ENCODE measurements at regions of chr17 and their contacts with region 1.

Region 1: DNA sequence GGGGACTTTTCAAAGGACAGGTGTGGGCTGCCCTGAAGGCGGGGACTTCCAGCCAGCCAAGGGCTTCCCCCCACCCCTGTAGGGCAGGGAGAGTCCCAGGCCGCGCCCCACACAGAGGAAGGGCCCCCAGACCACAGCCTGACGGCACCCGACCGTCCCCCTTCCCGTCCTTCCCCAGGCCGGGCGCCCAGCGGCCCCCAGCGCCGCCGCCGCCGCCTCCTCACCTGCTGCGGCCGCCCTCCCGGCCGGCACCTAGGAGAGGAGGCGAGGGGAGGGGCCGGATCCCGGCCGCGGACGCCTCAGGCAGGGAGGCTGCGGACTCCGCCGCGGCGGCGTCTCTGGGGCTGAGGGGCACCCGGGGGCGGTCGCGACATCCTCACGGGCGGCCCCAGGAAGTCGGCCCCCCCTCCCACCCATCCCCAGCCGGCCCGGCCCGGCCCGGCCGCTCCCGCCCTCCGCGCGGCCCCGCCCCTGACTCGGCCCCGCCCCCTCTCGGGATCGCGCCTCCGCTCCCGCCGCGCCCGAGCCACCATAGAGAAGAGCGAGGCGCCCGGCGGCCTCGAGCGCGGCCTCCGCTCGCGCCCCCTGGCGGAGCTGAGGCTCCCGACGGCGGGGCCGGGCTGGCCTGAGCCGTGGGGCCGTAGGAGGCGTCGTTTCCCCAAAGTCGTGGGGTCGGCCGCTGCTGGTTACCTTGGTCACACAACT is 25.5 kb upstream of the RFFL start:
- DNase-seq: peak; percentile 87
- H3K4me3 Mint-ChIP-seq: peak overlapping the region; percentile 87
- H3K27ac Mint-ChIP-seq: peak overlapping the region; percentile 92
- H3K4me1 Mint-ChIP-seq: peaks cover 51% of the 10 kb centered on the region
- H3K27me3 Mint-ChIP-seq: no peaks in the 10 kb centered on the region

Region 2: DNA sequence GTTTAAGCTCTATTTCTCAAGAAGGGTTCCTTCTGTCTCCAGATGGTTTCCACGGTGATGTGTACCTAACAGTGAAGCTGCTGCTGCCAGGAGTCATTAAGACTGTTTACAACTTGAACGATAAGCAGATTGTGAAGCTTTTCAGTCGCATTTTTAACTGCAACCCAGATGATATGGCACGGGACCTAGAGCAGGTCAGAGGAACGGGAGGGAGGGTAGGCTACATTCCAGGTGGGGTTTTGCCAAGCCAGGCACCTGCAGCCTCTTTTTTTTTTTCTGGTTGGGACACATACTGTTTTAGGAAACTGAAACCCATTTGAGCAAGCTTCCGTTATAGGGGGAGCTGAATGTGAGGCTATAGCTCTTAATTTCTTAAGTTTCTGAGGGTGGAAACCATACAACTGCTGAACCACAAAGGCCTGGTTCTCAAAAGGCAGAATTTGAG is 98.1 kb before region 1 on chr17:
- CTCF ChIA-PET with region 1: interaction called, 14 read pairs
- POLR2A ChIA-PET with region 1: interaction called, 3 read pairs
- DNase-seq: no peak
- H3K4me3 Mint-ChIP-seq: no peak overlapping the region
- H3K27ac Mint-ChIP-seq: no peak overlapping the region
- H3K4me1 Mint-ChIP-seq: peaks cover 26% of the 10 kb centered on the region
- H3K27me3 Mint-ChIP-seq: no peaks in the 10 kb centered on the region

Region 3: DNA sequence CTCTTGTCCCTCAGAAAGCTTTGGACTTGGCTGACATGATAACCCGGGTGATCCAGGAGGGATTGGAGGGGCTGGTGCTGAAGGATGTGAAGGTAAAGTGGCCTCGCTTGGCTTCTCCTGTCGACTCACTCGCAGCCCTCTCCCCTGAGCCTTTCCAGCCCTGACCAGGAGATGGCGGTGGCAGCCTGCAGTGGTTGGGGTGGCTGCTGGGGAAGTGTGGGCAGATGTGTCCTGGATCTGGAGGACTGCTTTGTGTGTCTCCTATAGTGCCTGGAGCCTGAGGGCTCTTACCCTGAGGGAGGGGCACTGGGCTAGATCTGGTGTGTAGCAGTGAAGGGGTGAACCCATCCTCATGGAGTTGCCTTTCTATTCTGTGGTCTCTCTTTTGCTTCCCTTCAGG is 90.8 kb before region 1 on chr17:
- CTCF ChIA-PET with region 1: interaction called, 16 read pairs
- POLR2A ChIA-PET with region 1: no interaction called
- DNase-seq: peak; percentile 84
- H3K4me3 Mint-ChIP-seq: no peak overlapping the region
- H3K27ac Mint-ChIP-seq: peak overlapping the region; percentile 60
- H3K4me1 Mint-ChIP-seq: peaks cover 10% of the 10 kb centered on the region
- H3K27me3 Mint-ChIP-seq: no peaks in the 10 kb centered on the region

Region 4: DNA sequence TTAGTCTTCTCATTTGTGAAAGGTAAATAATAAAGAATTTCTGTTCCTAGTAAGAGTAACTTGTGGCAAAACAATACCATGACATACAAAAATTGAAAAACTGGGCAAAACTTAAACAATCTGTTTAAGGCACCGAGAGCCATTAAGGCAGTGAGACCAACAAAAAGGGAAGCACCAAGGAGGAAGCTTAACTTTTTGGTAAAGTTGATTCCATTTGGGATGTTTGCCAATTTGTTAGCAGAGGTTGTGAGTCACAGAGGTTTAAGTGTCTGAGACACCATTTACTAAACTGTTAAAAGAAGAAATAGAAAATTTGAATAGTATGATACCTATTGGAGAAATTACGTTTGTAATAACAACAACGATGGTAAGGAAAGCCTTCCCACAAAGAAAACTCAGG is 100.3 kb after region 1 on chr17:
- CTCF ChIA-PET with region 1: no interaction called
- POLR2A ChIA-PET with region 1: no interaction called
- DNase-seq: no peak
- H3K4me3 Mint-ChIP-seq: peak overlapping the region; percentile 22
- H3K27ac Mint-ChIP-seq: no peak overlapping the region
- H3K4me1 Mint-ChIP-seq: peaks cover 47% of the 10 kb centered on the region
- H3K27me3 Mint-ChIP-seq: no peaks in the 10 kb centered on the region